ENCODE measurements at regions of chr7 and their contacts with region 1.

Region 1: GRCh38 chr7:54981913-54982312 is 36.9 kb upstream of the EGFR start:
- DNase-seq: no peak
- H3K4me3 ChIP-seq: no peak overlapping the region
- H3K27ac ChIP-seq: no peak overlapping the region
- H3K4me1 ChIP-seq: no peaks in the 10 kb centered on the region
- H3K27me3 ChIP-seq: no peaks in the 10 kb centered on the region
- CTCF ChIP-seq: no peak
- EP300 ChIP-seq: no peak
- POLR2A ChIP-seq: no peak

Region 2: DNA sequence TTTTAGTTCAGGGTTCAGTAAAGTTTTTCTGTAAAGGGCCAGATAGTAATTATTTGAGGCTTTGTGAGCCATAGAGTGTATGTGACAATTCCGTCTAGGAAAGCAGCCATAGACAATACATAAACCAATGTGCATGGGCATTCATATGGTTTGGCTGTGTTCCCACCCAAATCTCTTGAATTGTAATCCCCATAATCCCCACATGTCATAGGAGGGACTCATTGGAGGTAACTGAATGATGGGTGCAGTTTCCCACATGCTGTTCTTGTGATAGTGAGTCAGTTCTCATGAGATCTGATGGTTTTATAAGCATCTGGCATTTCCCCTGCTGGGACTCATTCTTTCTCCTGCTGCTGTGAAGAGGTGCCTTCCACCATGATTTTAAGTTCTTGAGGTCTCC is 252.8 kb before region 1 on chr7:
- in situ Hi-C with region 1: no loop called
- intact Hi-C with region 1: no loop called
- DNase-seq: no peak
- H3K4me3 ChIP-seq: no peak overlapping the region
- H3K27ac ChIP-seq: no peak overlapping the region
- H3K4me1 ChIP-seq: no peaks in the 10 kb centered on the region
- H3K27me3 ChIP-seq: no peaks in the 10 kb centered on the region
- CTCF ChIP-seq: no peak
- EP300 ChIP-seq: no peak
- POLR2A ChIP-seq: no peak

Region 3: GRCh38 chr7:54960517-54960916 is 21.4 kb before region 1 on chr7:
- in situ Hi-C with region 1: no loop called
- intact Hi-C with region 1: no loop called
- DNase-seq: no peak
- H3K4me3 ChIP-seq: no peak overlapping the region
- H3K27ac ChIP-seq: no peak overlapping the region
- H3K4me1 ChIP-seq: no peaks in the 10 kb centered on the region
- H3K27me3 ChIP-seq: no peaks in the 10 kb centered on the region
- CTCF ChIP-seq: no peak
- EP300 ChIP-seq: no peak
- POLR2A ChIP-seq: no peak

Region 4: DNA sequence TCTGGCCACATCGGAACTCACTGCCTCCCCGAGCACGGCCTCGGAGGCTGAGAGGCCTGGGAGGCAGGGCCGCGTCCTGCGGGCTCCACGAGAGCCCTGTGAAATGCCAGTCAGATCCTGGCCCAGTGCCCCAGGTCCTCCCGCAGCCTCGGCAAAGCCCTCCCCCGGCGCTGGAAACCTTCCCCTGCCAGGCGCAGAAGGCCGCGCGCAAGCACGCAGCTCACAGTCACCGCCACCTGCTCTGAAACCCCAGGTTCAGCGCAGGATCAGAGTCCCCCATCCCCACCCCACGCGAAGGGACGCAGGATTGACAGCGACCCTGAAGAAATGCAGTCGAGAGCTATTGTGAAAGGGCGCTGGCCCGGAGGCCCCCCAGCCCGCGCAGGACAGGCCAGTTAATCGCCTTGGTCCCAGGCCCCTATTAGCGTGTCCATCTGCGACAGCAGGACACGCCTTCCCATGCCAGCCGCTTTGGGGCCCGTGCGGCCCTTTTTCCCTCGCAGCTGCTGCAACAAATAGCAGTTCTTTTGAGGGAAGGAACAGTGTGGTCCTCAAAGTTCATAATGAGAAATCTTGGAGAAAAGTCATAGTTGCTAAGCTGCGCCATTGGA is 23.4 kb after region 1 on chr7:
- in situ Hi-C with region 1: no loop called
- intact Hi-C with region 1: loop called (anchors 1 kb)
- DNase-seq: no peak
- H3K4me3 ChIP-seq: no peak overlapping the region
- H3K27ac ChIP-seq: no peak overlapping the region
- H3K4me1 ChIP-seq: no peaks in the 10 kb centered on the region
- H3K27me3 ChIP-seq: no peaks in the 10 kb centered on the region
- CTCF ChIP-seq: no peak
- EP300 ChIP-seq: no peak
- POLR2A ChIP-seq: no peak

Measured in transverse colon (tissue), 4 donors.